GM12878 (cell line): ENCODE measurements at regions of chr5 and their contacts with region 1.

Region 1: DNA sequence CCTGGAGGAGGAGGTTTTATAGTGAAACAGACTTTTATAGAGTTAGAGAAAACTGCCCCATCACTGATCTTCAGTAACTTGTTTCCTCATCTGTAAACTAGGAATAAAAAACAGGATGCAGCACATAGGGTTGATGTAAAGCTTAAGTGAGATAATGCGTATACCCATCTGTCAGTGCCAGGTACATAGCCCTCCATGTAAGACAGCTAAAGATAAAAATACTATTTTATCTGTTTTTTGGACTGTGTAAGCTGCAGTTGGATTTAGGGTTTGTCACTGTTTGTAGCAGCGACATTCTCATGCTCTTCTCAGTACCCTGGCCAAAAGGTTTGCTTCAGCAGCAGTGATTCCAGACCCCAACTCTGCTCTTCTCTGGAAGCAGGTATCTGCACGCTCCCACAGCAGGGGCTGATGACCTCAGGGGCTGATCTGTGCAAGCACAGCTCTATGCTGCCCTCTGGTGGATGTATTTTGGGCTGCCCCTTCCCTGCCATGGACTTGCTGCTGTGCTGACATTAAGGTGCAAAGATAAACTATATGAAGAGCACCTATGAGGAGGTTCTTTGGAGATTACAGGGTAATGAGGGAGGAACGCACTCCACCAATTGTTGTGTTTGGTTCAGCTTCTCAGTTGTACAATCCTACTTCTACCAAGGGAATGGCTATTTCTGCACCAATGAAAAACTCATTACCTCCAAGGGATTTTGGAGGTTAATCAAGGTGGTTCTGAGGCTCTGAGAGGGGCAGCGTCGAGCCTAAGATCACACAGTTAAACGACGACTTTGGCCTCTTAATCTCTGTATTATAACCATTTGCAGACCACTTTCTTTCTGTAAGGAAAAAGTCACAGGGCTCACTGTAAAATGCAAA is 13.1 kb downstream of the HMHB1 start:
- DNase-seq: peak; percentile 81
- ATAC-seq: peak; percentile 87
- H3K4me3 ChIP-seq: no peak overlapping the region
- H3K27ac ChIP-seq: no peak overlapping the region
- H3K4me1 ChIP-seq: peaks cover 26% of the 10 kb centered on the region
- H3K27me3 ChIP-seq: no peaks in the 10 kb centered on the region
- CTCF ChIP-seq: peak; percentile 91 to 93 (median 93); a peak in 5 of 6 replicates
- EP300 ChIP-seq: no peak
- POLR2A ChIP-seq: no peak
- RAD21 ChIP-seq: peak; percentile 100

Region 2: DNA sequence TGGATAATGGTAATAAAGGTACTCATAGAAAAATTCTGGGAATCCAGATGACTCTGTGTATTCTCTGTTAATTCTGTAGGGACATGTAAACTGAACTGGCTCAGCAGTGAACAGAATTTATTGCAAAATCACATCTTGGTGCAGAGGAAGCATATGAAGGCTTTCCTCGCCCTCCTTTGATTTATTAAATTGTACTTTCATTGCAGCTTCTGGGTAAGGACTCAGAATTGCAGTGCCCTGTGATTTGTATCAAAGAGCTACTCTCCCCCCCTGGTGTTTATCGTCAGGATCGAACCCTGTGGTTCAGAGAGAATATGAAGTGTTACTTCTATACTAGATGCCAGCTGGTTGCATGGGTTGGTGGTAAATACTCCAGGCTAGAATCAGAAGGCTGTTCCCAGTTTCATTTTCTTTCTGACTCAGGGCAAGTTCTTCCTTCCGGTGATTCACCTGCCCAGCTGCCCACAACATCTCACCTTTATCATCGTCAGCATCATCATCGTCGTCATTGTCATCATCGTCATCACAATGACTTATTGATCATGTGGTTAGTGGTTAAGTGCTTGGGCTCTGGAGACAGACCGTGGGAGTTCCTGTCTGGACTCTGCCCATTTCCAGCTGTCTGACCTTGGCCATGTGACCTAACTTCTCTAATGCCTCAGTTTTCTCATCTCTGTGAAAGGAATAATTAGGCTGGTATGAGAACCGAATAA is 816.1 kb before region 1 on chr5:
- CTCF ChIA-PET with region 1: interaction called, 24 read pairs
- POLR2A ChIA-PET with region 1: interaction called, 3 read pairs
- RAD21 ChIA-PET with region 1: interaction called, 37 read pairs
- SMC1A ChIA-PET with region 1: interaction called, 21 read pairs
- in situ Hi-C with region 1: loop called (anchors 5 kb)
- intact Hi-C with region 1: no loop called
- DNase-seq: peak; percentile 98
- ATAC-seq: peak; percentile 90
- H3K4me3 ChIP-seq: no peak overlapping the region
- H3K27ac ChIP-seq: peak overlapping the region; percentile 47; the same call in 1 of the 2 replicates
- H3K4me1 ChIP-seq: peaks cover 27% of the 10 kb centered on the region
- H3K27me3 ChIP-seq: no peaks in the 10 kb centered on the region
- CTCF ChIP-seq: peak; percentile 13 to 25 (median 25); a peak in 2 of 6 replicates
- EP300 ChIP-seq: peak; percentile 100
- POLR2A ChIP-seq: no peak
- RAD21 ChIP-seq: 0 out of 2 replicates have a peak, but pooled peaks have one; percentile 30

Region 3: DNA sequence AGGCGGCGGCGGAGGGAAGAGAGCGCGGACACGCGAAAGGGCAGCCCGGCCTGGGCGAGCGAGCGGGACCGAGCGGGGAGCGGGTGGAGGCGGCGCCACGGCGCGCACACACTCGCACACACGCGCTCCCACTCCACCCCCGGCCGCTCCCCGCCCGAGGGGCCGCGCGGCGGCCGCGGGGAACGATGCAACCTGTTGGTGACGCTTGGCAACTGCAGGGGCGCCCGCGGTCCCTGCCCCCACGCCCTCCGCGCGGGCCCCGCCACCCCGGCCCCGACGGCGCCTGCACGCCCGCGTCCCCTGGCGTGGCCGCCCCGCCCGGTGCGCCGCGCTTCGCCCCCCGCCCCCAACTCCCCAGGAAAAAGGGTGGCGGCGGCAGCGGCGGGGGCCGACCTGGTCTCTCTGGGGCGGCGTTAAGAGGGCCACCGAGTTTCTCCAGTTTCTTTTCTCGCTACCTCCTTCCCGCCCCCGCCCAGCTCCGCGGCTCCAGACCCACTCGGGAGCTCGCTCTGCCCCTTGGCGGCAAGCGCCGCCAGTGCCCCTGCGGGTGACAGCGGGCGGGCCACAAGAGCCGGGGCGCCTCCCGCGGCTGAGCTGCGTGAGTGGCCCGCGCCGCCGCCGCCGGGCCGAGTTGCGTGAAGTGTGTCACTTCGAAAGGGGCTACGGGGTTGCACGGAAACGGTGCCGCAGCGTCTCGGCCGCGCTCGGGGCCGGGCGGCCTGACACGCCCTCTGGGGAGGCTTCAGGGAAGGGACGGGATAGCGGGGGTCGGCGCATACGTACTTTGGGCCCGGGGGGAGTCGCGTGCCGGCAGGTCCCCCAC is 421.3 kb before region 1 on chr5 and contains the start of gene NR3C1:
- CTCF ChIA-PET with region 1: interaction called, 24 read pairs
- POLR2A ChIA-PET with region 1: no interaction called
- RAD21 ChIA-PET with region 1: interaction called, 57 read pairs
- SMC1A ChIA-PET with region 1: interaction called, 48 read pairs
- in situ Hi-C with region 1: loop called (anchors 5 kb)
- intact Hi-C with region 1: loop called (anchors 1 kb)
- DNase-seq: no peak
- ATAC-seq: peak; percentile 51
- H3K4me3 ChIP-seq: peak within 1 kb of the TSS; percentile 83
- H3K27ac ChIP-seq: peak within 1 kb of the TSS; percentile 99
- H3K4me1 ChIP-seq: no peaks in the 10 kb centered on the region
- H3K27me3 ChIP-seq: no peaks in the 10 kb centered on the region
- CTCF ChIP-seq: peak; percentile 38 to 76 (median 64); a peak in 5 of 6 replicates
- EP300 ChIP-seq: peak; percentile 25 to 38; a peak in 2 of 4 replicates
- POLR2A ChIP-seq: peak; percentile 78
- RAD21 ChIP-seq: peak; percentile 67
- polyA plus RNA-seq, gene NR3C1: 89.0 to 119 TPM

Region 4: DNA sequence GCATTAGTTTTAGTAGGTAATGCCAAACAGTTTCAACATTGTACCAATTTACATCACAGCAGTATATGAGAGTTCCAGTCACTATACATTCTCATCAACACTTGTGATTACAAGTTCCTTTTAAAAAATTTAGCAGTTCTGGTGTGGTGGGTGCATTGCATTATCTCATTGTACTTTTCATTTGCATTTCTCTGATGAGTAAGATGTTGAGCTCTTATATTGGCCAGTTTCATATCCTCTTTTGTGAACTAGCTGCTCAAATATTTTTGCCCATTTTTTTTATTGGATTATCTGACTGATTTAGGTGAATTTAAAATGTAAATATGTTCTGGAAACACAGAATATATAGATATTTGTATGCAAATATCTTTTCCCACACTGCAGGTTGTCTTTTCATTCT is 260.7 kb before region 1 on chr5:
- CTCF ChIA-PET with region 1: interaction called, 11 read pairs
- POLR2A ChIA-PET with region 1: no interaction called
- RAD21 ChIA-PET with region 1: interaction called, 9 read pairs
- SMC1A ChIA-PET with region 1: interaction called, 5 read pairs
- in situ Hi-C with region 1: no loop called
- intact Hi-C with region 1: loop called (anchors 2 kb)
- DNase-seq: peak; percentile 58
- ATAC-seq: peak; percentile 99
- H3K4me3 ChIP-seq: no peak overlapping the region
- H3K27ac ChIP-seq: no peak overlapping the region
- H3K4me1 ChIP-seq: peaks cover 9% of the 10 kb centered on the region; the same call in 1 of the 2 replicates
- H3K27me3 ChIP-seq: no peaks in the 10 kb centered on the region
- CTCF ChIP-seq: no peak
- EP300 ChIP-seq: peak; percentile 80 to 91
- POLR2A ChIP-seq: no peak
- RAD21 ChIP-seq: no peak

Region 5: DNA sequence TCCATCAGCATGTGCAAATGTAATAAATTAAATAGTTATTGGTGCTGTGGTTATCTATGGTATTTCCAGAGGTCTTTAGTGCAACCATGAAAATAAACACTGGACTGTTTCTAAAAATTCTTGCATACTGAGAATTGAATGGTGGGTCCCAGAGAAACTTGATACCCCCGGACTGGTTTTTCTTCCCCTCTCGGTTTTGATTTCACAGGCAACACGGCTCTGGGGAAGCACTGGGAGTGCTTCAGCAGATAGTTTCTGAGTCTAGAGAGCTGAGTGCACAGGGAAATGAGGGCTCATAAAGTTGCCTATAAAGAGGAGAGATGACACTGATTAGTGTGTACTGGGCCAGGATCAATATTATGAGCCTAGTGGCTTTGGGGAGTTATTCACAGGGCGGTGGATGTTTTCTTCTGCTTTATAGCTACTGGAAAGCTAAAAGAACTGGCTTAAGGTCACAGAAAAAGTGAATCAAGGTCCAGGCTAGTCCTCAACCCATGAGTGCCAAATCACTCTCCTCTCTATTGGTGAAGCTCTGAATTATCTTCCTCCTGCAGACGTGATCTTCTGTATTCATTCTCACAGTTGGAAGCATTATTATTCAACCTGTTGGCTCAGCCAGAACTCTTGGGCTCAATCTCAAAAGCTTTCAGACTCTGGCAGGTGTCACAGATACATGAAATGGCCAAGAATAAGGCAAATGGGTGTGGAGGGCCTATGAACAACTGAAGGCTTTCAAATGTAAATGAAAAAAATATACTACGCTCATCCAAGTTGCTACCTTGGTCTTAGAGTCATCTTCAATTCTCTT is 183.3 kb before region 1 on chr5:
- CTCF ChIA-PET with region 1: interaction called, 5 read pairs
- POLR2A ChIA-PET with region 1: no interaction called
- RAD21 ChIA-PET with region 1: no interaction called
- SMC1A ChIA-PET with region 1: interaction called, 6 read pairs
- in situ Hi-C with region 1: no loop called
- intact Hi-C with region 1: loop called (anchors 2 kb)
- DNase-seq: peak; percentile 31
- ATAC-seq: peak; percentile 90
- H3K4me3 ChIP-seq: no peak overlapping the region
- H3K27ac ChIP-seq: no peak overlapping the region
- H3K4me1 ChIP-seq: peaks cover 20% of the 10 kb centered on the region; the same call in 1 of the 2 replicates
- H3K27me3 ChIP-seq: no peaks in the 10 kb centered on the region
- CTCF ChIP-seq: no peak
- EP300 ChIP-seq: no peak
- POLR2A ChIP-seq: no peak
- RAD21 ChIP-seq: no peak

Region 6: DNA sequence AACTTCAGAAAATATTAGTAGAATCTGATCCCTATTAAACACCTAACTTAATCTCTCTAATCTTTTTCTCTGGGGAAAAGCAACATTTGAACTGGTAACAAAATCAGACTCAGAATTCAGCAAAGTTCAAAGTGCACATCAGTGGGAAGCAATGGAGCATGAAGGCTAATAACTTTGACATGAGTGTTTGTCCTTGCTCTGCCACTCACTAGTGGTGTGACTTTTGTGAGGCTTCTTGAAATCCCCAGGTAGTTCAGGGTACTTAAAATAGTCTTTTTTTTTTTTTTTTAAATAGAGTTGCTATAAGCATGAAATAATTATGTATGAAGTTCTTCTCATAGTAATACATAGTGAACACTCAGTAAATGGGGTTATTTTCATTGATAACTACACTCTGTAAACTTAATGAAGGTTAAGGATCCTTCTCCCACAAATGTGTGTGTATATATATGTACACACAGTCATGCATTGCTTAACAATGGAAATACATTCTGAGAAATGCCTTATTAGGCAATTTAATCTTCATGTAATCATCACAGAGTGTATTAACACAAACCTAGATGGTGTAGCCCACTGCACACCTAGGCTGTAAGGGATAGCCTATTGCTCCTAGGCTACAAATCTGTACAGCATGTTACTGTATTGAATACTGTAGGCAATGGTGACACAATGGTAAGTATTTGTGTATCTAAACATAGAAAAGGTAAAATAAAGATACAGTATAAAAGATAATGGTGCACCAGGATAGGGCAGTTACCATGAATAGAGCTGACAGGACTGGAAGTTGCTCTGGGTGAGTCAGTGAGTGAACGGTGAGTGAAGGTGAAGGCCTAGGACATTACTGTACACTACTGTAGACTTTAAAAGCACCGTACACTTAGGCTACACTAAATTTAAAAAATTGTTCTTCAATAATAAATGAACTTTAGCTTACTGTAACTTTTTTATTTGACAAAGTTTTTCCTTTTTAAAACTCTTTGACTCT is 86.4 kb before region 1 on chr5:
- CTCF ChIA-PET with region 1: interaction called, 6 read pairs
- POLR2A ChIA-PET with region 1: interaction called, 4 read pairs
- RAD21 ChIA-PET with region 1: interaction called, 6 read pairs
- SMC1A ChIA-PET with region 1: interaction called, 11 read pairs
- in situ Hi-C with region 1: no loop called
- intact Hi-C with region 1: no loop called
- DNase-seq: peak; percentile 28
- ATAC-seq: peak; percentile 89
- H3K4me3 ChIP-seq: no peak overlapping the region
- H3K27ac ChIP-seq: no peak overlapping the region
- H3K4me1 ChIP-seq: no peaks in the 10 kb centered on the region
- H3K27me3 ChIP-seq: no peaks in the 10 kb centered on the region
- CTCF ChIP-seq: no peak
- EP300 ChIP-seq: 0 out of 4 replicates have a peak, but pooled peaks of 1 of the 2 experiments have one; percentile 6
- POLR2A ChIP-seq: no peak
- RAD21 ChIP-seq: no peak

Region 7: DNA sequence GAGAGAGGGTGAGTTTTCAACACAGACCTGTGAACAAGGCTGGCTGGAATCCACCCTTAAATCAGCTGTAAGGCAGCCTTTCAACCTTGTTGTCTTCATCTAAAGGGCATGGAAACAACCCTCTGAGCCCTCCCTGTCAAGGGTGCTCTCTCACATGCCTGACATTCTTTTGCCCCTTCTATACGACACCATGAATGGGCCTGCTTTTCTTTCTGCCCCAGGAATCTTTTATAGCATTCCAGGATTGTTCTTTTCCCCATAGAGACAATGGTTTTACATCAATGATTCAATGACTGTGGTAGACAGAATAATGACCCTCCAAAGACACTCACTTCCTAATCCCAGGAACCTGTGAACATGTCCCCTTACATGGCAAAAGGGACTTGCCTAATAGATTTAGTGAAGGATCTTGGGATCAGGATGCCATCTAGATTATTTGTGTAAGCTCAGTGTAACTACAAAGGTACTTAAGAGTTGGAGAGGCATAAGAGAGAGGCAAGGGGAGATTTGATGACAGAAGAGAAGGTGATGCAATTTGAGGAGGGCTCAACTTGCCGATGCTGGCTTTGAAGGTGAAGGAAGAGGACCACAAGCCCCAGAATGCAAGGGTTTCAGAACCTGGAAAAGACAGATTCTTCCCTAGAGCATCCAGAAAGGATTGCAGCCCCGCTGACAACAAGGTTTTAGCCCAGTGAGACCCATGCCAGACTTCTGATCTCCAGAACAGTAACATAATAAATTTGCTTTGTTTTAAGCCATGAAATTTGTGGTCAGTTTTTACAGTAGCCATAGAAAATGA is 42.3 kb before region 1 on chr5:
- CTCF ChIA-PET with region 1: no interaction called
- POLR2A ChIA-PET with region 1: no interaction called
- RAD21 ChIA-PET with region 1: no interaction called
- SMC1A ChIA-PET with region 1: no interaction called
- in situ Hi-C with region 1: no loop called
- intact Hi-C with region 1: no loop called
- DNase-seq: no peak
- ATAC-seq: peak; percentile 33
- H3K4me3 ChIP-seq: no peak overlapping the region
- H3K27ac ChIP-seq: no peak overlapping the region
- H3K4me1 ChIP-seq: no peaks in the 10 kb centered on the region
- H3K27me3 ChIP-seq: no peaks in the 10 kb centered on the region
- CTCF ChIP-seq: no peak
- EP300 ChIP-seq: no peak
- POLR2A ChIP-seq: no peak
- RAD21 ChIP-seq: no peak

Region 8: DNA sequence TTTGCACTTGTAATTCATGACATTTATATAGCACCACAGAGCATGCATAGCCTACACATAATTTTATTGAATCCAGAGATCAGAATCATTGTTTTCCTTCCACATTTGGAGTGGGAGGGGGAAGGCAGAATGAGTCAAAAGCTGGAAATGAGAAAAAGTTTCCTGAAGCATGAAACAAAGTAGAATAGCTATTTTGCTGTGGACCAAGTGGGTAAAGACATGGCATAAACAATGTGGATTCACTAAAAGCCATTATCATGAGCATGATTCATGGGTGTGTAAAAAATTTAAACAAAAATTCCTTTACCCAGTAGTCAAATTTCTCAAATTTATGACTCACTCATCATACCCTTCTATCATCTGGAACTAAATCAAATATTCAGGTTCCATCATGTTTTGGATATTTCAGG is 247.4 kb after region 1 on chr5:
- CTCF ChIA-PET with region 1: no interaction called
- POLR2A ChIA-PET with region 1: no interaction called
- RAD21 ChIA-PET with region 1: no interaction called
- SMC1A ChIA-PET with region 1: no interaction called
- in situ Hi-C with region 1: no loop called
- intact Hi-C with region 1: no loop called
- DNase-seq: no peak
- ATAC-seq: no peak
- H3K4me3 ChIP-seq: no peak overlapping the region
- H3K27ac ChIP-seq: no peak overlapping the region
- H3K4me1 ChIP-seq: no peaks in the 10 kb centered on the region
- H3K27me3 ChIP-seq: peaks cover 0 to 2% of the 10 kb centered on the region in 2 experiments; a peak in 1 of 4 replicates
- CTCF ChIP-seq: no peak
- EP300 ChIP-seq: no peak
- POLR2A ChIP-seq: no peak
- RAD21 ChIP-seq: no peak

Region 9: DNA sequence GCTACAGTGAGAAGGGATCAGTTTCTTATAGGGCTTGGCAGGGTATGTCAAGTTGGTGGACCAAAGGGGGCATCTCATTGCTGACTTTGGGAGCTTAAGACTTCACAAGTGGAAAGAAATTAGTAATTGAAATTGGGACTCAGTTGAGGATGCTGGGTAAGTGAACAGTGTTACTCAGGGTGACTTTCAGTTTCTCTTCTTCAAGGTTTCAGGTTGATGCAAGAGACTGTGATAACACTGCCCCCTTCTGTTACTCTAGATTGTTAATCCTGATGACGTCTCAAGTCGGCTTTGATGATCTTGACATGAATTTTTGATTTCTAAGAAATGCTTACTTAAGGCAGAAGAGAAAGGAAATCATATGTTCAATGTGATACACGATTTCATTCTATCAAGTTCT is 366.9 kb after region 1 on chr5:
- CTCF ChIA-PET with region 1: interaction called, 18 read pairs
- POLR2A ChIA-PET with region 1: no interaction called
- RAD21 ChIA-PET with region 1: interaction called, 3 read pairs
- SMC1A ChIA-PET with region 1: interaction called, 5 read pairs
- in situ Hi-C with region 1: no loop called
- intact Hi-C with region 1: loop called (anchors 5 kb)
- DNase-seq: peak; percentile 73
- ATAC-seq: peak; percentile 85
- H3K4me3 ChIP-seq: no peak overlapping the region
- H3K27ac ChIP-seq: peak overlapping the region; percentile 73
- H3K4me1 ChIP-seq: peaks cover 42% of the 10 kb centered on the region
- H3K27me3 ChIP-seq: no peaks in the 10 kb centered on the region
- CTCF ChIP-seq: peak; percentile 52 to 73 (median 69); a peak in 5 of 6 replicates
- EP300 ChIP-seq: no peak
- POLR2A ChIP-seq: no peak
- RAD21 ChIP-seq: peak; percentile 78